MCF 10A (cell line): ENCODE measurements at regions of chr19 and their contacts with region 1.

Region 1: GRCh38 chr19:6110360-6110977 is at the start of gene RFX2:
- DNase-seq: peak; percentile 100
- H3K4me3 Mint-ChIP-seq: peak within 1 kb of the TSS; percentile 88
- H3K27ac Mint-ChIP-seq: peak within 1 kb of the TSS; percentile 95
- H3K4me1 Mint-ChIP-seq: peaks cover 28% of the 10 kb centered on the region
- H3K27me3 Mint-ChIP-seq: no peaks in the 10 kb centered on the region
- CTCF ChIP-seq: no peak
- total RNA-seq, gene RFX2: 9.9 and 10.7 TPM in 2 replicates

Region 2: GRCh38 chr19:5993648-5994358 is 116.7 kb before region 1 on chr19:
- CTCF ChIA-PET with region 1: no interaction called
- POLR2A ChIA-PET with region 1: no interaction called
- intact Hi-C with region 1: no loop called
- DNase-seq: no peak
- H3K4me3 Mint-ChIP-seq: no peak overlapping the region
- H3K27ac Mint-ChIP-seq: no peak overlapping the region
- H3K4me1 Mint-ChIP-seq: no peaks in the 10 kb centered on the region
- H3K27me3 Mint-ChIP-seq: no peaks in the 10 kb centered on the region
- CTCF ChIP-seq: no peak

Region 3: DNA sequence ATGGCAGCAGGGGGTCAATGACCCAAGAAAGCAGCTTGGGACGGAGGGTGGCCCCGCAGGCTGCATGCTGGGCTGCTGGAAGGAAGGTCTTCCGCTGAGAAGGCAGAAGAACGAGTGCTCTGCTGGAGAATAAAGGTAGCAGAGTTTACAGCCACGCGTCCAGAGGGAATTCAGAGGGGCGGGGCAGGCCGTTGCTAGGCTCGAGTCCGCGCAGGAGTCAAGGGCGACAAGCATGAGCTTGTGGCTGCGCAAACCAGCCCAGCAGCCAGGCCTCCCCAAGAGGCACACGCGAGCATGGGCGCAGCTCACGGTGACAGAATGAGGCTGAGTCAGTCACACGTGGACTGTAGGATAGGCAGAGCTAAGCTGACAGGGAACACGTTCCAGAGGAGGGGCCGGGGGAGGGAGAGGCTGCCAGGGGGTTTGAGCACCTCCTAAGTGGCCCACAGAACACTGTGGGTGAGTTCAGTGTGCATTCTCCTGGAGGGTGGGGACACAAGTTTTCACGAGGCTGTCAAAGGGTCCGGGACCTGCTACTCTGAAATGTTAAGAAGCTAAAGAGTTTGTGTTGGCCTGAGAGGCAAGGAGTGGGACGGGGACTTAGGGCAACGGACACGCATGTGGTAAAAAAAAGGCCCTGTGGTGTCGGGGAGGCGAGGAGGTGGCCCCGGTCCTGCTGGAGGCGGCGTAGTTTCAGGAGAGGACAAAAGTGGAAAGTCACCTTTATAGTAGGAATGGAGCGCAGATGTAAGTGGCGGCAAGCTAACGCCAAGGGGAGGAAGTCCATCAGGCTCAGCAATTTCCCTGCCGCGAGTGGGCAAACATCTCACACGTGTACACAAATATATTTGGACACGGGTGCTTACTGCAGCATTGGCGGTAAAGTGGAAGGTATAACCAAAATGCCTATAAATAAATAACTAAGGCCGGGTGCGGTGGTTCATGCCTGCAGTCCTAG is 17.9 kb before region 1 on chr19:
- CTCF ChIA-PET with region 1: interaction called, 6 read pairs
- POLR2A ChIA-PET with region 1: interaction called, 129 read pairs
- intact Hi-C with region 1: no loop called
- DNase-seq: peak; percentile 88
- H3K4me3 Mint-ChIP-seq: peak overlapping the region; percentile 66
- H3K27ac Mint-ChIP-seq: peak overlapping the region; percentile 97
- H3K4me1 Mint-ChIP-seq: peaks cover 32% of the 10 kb centered on the region
- H3K27me3 Mint-ChIP-seq: no peaks in the 10 kb centered on the region
- CTCF ChIP-seq: no peak

Region 4: DNA sequence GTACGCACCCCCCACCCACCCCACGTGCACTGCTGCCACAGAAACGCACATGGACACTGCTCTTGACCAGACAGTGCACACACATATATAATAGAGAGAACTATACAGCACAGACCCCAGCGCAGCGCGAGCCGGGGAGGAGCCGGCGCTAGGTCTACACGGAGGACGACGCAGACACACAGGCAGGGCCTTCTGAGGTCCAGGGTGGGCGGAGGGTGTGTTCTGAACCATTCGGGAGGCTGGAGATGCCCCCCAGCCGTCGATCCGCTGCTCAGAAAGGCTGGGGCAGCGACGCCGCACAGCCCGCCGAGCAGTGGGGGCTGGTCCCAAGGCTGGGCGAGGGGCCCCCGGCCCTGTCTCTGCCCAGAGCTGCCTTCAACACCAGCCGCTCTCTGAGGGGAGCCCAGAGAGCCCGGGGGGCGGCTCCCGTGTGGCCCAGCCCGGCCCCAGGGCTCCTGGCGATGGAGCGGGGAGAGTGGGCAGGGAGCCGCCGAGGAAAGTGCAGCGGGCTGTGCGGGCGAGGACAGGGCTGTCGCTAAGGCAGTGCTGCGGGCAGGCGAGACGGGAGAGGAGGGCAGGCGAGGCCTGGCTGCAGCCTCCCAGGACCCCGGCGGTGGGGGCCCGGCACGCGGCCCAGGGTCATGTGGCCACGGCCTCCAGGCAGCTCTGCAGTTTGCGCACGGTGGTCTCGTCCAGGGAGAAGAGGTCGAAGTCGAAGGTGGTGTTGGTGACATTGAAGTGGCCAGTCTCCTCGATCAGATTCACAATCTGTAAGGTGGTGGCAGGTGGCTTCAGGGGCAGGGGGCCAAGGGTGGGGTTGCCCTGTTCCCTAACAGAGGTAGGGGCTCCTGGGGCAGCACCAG is 102.2 kb after region 1 on chr19:
- CTCF ChIA-PET with region 1: no interaction called
- POLR2A ChIA-PET with region 1: no interaction called
- intact Hi-C with region 1: no loop called
- DNase-seq: no peak
- H3K4me3 Mint-ChIP-seq: no peak overlapping the region
- H3K27ac Mint-ChIP-seq: no peak overlapping the region
- H3K4me1 Mint-ChIP-seq: no peaks in the 10 kb centered on the region
- H3K27me3 Mint-ChIP-seq: no peaks in the 10 kb centered on the region
- CTCF ChIP-seq: no peak

Region 5: GRCh38 chr19:6393074-6393983 is 282.9 kb after region 1 on chr19 and contains the start of gene GTF2F1:
- CTCF ChIA-PET with region 1: no interaction called
- POLR2A ChIA-PET with region 1: no interaction called
- intact Hi-C with region 1: no loop called
- DNase-seq: peak; percentile 93
- H3K4me3 Mint-ChIP-seq: peak within 1 kb of the TSS; percentile 89
- H3K27ac Mint-ChIP-seq: peak within 1 kb of the TSS; percentile 95
- H3K4me1 Mint-ChIP-seq: peaks cover 18% of the 10 kb centered on the region
- H3K27me3 Mint-ChIP-seq: no peaks in the 10 kb centered on the region
- CTCF ChIP-seq: no peak
- total RNA-seq, gene GTF2F1: 65.6 and 84.8 TPM in 2 replicates